Right ventricle myocardium superior (tissue), 1 donor: ENCODE measurements at regions of chr15 and their contacts with region 1.

Region 1: DNA sequence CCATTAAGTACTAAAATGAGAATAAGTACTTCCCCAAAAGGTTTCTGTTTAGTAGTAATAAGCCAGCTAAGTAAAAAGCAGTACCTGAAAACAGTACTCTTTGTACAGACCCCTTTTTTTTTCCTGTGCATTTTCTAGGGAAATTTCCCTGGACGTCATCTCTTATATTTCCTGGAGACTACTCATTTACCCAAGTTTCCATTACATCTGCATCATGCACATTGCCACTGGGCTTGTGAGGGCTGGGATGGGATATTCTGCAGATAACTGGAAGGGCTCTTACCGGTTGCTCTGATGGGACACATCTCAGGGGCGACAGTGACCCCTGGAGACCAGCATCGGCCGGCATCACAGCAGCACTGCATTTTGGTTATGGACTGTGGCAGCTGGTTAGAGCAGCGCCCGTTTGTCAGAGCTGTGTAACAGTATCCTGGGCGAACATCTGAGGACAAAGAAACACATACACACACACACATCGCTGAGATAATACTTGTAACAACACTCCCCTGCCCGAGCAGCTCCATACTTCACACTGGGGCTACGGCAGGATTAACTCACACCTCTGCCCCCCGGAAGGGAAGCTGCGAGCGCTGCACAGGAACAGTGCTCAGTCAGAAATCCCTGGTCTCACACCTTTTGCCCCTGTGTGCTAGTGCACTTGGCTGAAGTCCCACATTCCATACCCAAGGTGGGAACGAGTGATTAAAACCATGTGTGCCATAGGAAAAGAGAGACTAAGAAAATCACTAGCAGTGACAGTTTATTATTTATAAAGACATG is 124.9 kb downstream of the FBN1 start:
- DNase-seq: peak; percentile 40
- ATAC-seq: no peak

Region 2: GRCh38 chr15:47888385-47889100 is 632.0 kb before region 1 on chr15:
- intact Hi-C with region 1: no loop called
- DNase-seq: no peak
- ATAC-seq: no peak

Region 3: DNA sequence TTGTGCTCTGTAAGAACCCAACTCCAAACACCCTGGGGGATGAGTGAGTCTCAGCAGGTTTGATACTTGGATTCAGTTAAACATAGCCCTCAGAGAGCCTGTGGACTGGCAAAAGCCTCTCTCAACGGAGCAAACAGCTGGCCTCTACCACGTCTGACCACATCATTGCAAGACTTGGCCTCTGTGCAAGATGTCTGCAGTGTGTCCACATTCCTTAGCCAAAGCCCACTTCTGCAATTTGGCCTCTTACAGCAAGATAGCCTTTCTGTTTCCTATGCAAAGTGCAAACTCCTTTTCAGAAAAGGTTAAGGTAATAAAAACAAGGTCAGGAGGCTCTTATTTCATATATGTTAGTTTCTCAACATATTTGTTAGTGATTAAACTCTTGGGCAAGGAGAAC is 97.1 kb after region 1 on chr15:
- intact Hi-C with region 1: no loop called
- DNase-seq: peak; percentile 47
- ATAC-seq: peak; percentile 87

Region 4: DNA sequence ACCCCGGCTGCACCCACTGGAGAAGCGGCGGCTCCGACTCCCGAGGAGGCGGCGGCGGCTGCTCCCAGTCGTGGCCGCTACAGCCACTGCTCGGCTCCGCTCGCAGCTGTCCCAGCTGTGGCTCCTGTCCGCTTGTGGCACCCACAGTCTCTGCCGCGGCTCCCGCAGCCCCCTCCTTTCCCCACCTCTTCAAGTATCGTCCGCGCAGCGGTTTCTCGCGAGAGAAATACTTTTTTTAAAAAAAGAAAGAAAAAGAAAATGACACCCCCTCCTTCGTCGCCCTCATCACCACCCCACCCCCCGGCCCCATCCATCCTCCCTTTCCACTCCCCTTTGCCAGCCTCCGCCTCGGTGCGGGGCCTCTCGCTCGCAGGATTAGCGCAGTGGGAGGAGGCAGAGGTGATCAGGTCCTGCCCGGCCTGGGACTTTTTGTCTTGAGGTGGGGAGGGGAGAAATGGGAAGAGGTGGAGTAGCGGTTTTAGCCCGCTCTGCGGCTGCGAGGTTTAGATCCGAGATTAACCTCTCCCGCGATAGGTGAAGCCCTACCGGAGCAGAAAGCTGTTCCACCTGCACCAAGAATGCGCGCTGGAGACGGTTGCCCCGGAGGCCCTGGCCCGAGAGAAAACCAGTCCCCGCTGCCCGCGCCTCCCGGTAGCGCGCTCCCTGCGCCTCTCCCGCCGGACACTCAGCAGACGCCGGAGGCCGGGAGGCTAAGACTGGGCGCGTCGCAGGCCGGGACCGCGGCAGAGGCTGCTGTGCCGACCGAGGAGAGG is 125.2 kb after region 1 on chr15 and contains the start of gene FBN1:
- intact Hi-C with region 1: loop called (anchors 10 kb)
- DNase-seq: peak; percentile 80
- ATAC-seq: peak; percentile 84
- total RNA-seq, gene FBN1: 39.4 TPM